ENCODE measurements at regions of chr7 and their contacts with region 1.

Region 1: GRCh38 chr7:87959336-87959735 is 25.3 kb downstream of the ADAM22 start:
- DNase-seq: no peak
- ATAC-seq: no peak
- H3K4me3 ChIP-seq: no peak overlapping the region
- H3K27ac ChIP-seq: no peak overlapping the region
- H3K4me1 ChIP-seq: no peaks in the 10 kb centered on the region
- H3K27me3 ChIP-seq: no peaks in the 10 kb centered on the region
- CTCF ChIP-seq: no peak

Region 2: DNA sequence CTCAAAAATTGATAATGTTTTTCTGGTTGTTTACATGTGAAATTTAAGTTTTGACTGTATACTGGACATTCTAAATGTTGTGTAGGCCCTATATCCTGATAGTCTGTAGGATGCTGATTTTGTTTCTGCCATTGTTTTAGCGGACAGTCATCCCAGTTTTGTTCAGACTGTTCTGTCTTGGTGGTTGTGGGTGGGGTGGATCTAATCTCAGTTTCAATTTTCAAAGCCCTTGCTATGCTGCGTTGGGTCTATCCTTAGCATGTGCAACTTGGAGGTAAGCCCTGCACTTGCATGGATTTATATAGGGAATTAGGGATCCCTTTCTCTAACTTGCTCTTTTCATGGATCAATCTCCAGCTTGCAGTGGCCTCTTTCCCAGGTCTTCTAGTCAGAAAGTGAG is 64.0 kb before region 1 on chr7:
- intact Hi-C with region 1: loop called in 1 of 10 experiments (anchors 10 kb)
- DNase-seq: no peak
- ATAC-seq: no peak
- H3K4me3 ChIP-seq: no peak overlapping the region
- H3K27ac ChIP-seq: no peak overlapping the region
- H3K4me1 ChIP-seq: no peaks in the 10 kb centered on the region
- H3K27me3 ChIP-seq: no peaks in the 10 kb centered on the region
- CTCF ChIP-seq: no peak

Region 3: DNA sequence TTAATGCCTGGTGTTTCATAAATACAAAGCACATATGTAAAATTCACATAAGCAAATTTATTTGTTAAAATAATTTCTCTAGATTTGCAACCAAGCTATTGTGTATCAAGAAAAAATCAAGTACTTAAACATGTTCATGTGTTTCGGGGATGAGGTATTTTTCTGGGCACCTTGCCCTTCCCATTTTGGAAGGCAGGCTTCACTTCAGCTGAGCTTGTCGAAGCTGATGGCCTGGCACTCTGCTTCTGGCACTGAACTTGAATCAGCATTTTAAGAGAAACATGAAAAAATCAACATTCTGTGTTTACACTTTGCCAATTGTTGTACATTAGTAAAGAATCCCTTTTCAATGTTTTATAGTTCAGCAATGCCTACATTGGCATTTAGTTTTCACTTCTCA is 526.5 kb after region 1 on chr7:
- intact Hi-C with region 1: no loop called
- DNase-seq: no peak
- ATAC-seq: no peak
- H3K4me3 ChIP-seq: no peak overlapping the region
- H3K27ac ChIP-seq: no peak overlapping the region
- H3K4me1 ChIP-seq: no peaks in the 10 kb centered on the region
- H3K27me3 ChIP-seq: peaks cover 0 to 3% (median 0%) of the 10 kb centered on the region in 7 donors
- CTCF ChIP-seq: no peak

Measured in heart right ventricle (tissue), 16 donors.